PC-3 (cell line): ENCODE measurements at regions of chr13 and their contacts with region 1.

Region 1: DNA sequence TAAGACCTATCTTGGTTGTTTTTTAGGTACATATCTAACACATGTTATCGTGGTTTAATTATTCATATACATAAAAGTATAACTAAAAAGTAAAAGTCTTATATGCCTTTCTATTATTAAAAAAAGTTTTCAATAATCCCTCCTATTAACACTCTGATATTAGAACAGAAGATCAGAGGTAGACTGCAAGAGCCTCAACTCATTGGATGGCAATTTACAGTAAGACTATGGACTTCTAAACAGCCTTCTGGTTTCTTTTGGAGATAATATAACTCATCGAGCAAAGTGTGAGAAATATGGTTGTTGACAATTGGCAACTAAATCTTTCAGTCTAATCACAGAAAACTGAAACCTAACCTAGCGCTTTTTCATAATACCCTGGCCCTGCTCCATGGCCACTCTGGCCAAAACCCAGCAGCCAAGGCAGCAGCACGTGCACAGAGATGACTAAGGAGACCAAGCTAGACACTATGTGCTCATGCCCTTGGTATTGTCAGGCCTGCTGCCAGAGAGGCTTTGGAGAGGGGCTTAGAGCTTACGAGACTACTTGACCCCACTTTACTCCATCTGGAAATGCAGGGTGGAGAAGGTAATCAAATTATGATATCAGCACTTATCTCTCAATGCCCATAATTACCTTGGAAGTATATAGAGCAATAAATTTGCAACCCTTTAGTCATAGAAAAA is 40.6 kb upstream of the EEF1AKMT1 start:
- DNase-seq: peak; percentile 82
- ATAC-seq: peak; percentile 81
- H3K4me3 ChIP-seq: peak overlapping the region; percentile 8; the same call in 1 of the 2 replicates
- H3K27ac ChIP-seq: peak overlapping the region; percentile 25
- H3K4me1 ChIP-seq: peaks cover 26% of the 10 kb centered on the region
- H3K27me3 ChIP-seq: no peaks in the 10 kb centered on the region
- CTCF ChIP-seq: no peak

Region 2: GRCh38 chr13:20294497-20294896 is 519.9 kb before region 1 on chr13:
- CTCF ChIA-PET with region 1: no interaction called
- POLR2A ChIA-PET with region 1: no interaction called
- intact Hi-C with region 1: no loop called
- DNase-seq: peak; percentile 28
- ATAC-seq: no peak
- H3K4me3 ChIP-seq: no peak overlapping the region
- H3K27ac ChIP-seq: no peak overlapping the region
- H3K4me1 ChIP-seq: no peaks in the 10 kb centered on the region
- H3K27me3 ChIP-seq: no peaks in the 10 kb centered on the region
- CTCF ChIP-seq: peak; percentile 62

Region 3: GRCh38 chr13:20696073-20696472 is 118.3 kb before region 1 on chr13:
- CTCF ChIA-PET with region 1: no interaction called
- POLR2A ChIA-PET with region 1: no interaction called
- intact Hi-C with region 1: no loop called
- DNase-seq: no peak
- ATAC-seq: peak; percentile 13; the same call in 1 of the 2 replicates
- H3K4me3 ChIP-seq: no peak overlapping the region
- H3K27ac ChIP-seq: no peak overlapping the region
- H3K4me1 ChIP-seq: 0 out of 2 replicates have a peak, but pooled peaks cover 8% of the 10 kb centered on the region
- H3K27me3 ChIP-seq: no peaks in the 10 kb centered on the region
- CTCF ChIP-seq: no peak

Region 4: DNA sequence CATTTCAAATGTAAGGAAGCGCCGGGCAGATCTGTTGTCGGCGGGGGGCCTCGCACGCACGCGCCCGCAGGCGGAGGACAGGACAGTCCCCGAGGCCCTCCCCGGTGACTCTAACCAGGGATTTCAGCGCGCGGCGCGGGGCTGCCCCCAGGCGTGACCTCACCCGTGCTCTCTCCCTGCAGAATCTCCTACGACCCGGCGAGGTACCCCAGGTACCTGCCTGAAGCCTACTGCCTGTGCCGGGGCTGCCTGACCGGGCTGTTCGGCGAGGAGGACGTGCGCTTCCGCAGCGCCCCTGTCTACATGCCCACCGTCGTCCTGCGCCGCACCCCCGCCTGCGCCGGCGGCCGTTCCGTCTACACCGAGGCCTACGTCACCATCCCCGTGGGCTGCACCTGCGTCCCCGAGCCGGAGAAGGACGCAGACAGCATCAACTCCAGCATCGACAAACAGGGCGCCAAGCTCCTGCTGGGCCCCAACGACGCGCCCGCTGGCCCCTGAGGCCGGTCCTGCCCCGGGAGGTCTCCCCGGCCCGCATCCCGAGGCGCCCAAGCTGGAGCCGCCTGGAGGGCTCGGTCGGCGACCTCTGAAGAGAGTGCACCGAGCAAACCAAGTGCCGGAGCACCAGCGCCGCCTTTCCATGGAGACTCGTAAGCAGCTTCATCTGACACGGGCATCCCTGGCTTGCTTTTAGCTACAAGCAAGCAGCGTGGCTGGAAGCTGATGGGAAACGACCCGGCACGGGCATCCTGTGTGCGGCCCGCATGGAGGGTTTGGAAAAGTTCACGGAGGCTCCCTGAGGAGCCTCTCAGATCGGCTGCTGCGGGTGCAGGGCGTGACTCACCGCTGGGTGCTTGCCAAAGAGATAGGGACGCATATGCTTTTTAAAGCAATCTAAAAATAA is 92.7 kb before region 1 on chr13:
- CTCF ChIA-PET with region 1: interaction called, 12 read pairs
- POLR2A ChIA-PET with region 1: no interaction called
- intact Hi-C with region 1: no loop called
- DNase-seq: peak; percentile 54
- ATAC-seq: peak; percentile 61
- H3K4me3 ChIP-seq: peak overlapping the region; percentile 39; the same call in 1 of the 2 replicates
- H3K27ac ChIP-seq: no peak overlapping the region
- H3K4me1 ChIP-seq: no peaks in the 10 kb centered on the region
- H3K27me3 ChIP-seq: no peaks in the 10 kb centered on the region
- CTCF ChIP-seq: no peak

Region 5: DNA sequence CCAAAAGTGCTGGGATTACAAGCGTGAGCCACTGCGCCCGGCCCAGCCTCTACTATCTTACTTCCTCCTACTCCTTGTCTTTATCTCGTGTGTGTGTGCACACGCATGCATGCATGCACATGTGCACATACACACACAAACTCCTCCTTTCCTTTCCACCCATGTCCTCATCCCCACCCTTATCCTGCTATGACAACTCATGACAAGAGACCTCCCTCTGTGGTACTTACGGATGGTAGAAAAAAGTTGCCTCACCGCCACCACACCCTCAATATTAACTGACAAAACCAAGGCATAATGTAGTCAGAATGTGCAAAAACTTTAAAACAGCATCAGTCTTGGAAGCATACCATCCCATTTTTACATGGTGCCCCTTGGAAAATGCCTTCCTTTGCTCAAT is 24.7 kb before region 1 on chr13:
- CTCF ChIA-PET with region 1: no interaction called
- POLR2A ChIA-PET with region 1: no interaction called
- intact Hi-C with region 1: loop called (anchors 1 kb)
- DNase-seq: no peak
- ATAC-seq: no peak
- H3K4me3 ChIP-seq: no peak overlapping the region
- H3K27ac ChIP-seq: peak overlapping the region; percentile 23
- H3K4me1 ChIP-seq: peaks cover 27% of the 10 kb centered on the region
- H3K27me3 ChIP-seq: no peaks in the 10 kb centered on the region
- CTCF ChIP-seq: no peak